Activated CD4-positive, alpha-beta T cell treated with anti-CD3 and anti-CD28 coated beads for 36 hours (primary cell): ENCODE measurements at regions of chr3 and their contacts with region 1.

Region 1: DNA sequence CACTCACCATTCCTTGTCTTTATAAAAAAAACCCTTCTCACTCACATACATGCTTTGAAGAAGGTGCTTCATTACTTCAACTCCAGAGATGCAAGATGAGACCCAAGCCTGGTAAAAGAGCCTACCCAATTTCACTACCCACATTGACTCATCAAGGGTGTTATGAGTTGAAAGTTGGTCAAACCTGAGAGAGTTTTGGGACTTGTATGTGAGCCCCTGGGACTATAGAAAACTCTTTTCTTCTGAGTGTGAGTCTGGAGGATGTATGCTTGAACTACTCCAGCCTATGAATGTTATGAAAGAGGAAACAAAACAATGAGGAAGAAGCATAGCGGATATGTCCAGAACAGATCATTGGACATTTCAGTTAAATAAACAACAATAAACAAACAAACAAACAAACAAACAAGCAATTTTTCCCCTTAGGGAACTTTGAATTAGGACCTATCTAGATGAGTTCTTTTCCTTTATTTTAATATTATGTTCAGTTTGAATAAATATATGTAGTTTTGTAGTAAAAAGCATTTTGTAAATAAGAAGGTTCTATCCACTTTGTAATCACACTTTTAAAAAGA is 106.6 kb upstream of the SATB1 start:
- DNase-seq: no peak
- ATAC-seq: peak; percentile 94
- H3K4me3 Mint-ChIP-seq: no peak overlapping the region
- H3K27ac Mint-ChIP-seq: no peak overlapping the region
- H3K4me1 Mint-ChIP-seq: peaks cover 18% of the 10 kb centered on the region
- H3K27me3 Mint-ChIP-seq: no peaks in the 10 kb centered on the region

Region 2: DNA sequence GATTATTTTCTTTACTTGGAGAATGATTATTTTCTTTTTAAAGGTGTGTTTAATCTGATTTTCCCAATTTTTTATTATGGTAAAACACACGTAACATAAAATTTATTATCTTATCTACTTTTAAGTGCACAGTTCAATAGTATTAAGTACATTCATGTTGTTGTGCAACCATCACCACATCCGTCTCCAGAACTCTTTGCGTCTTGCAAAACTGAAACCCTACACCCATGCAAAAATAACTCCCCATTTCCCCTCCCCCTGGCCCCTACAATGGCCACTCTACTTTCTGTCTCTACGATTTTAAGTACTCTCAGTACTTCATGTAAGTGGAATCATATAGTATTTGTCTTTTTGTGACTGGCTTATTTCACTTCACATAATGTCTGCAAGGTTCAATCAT is 337.3 kb before region 1 on chr3:
- CTCF ChIA-PET with region 1: no interaction called
- POLR2A ChIA-PET with region 1: no interaction called
- intact Hi-C with region 1: no loop called
- DNase-seq: no peak
- ATAC-seq: no peak
- H3K4me3 Mint-ChIP-seq: no peak overlapping the region
- H3K27ac Mint-ChIP-seq: no peak overlapping the region
- H3K4me1 Mint-ChIP-seq: no peaks in the 10 kb centered on the region
- H3K27me3 Mint-ChIP-seq: peaks cover 9% of the 10 kb centered on the region

Region 3: GRCh38 chr3:18295171-18295920 is 236.4 kb before region 1 on chr3:
- CTCF ChIA-PET with region 1: no interaction called
- POLR2A ChIA-PET with region 1: no interaction called
- intact Hi-C with region 1: no loop called
- DNase-seq: peak; percentile 71
- ATAC-seq: peak; percentile 89
- H3K4me3 Mint-ChIP-seq: no peak overlapping the region
- H3K27ac Mint-ChIP-seq: no peak overlapping the region
- H3K4me1 Mint-ChIP-seq: no peaks in the 10 kb centered on the region
- H3K27me3 Mint-ChIP-seq: no peaks in the 10 kb centered on the region

Region 4: DNA sequence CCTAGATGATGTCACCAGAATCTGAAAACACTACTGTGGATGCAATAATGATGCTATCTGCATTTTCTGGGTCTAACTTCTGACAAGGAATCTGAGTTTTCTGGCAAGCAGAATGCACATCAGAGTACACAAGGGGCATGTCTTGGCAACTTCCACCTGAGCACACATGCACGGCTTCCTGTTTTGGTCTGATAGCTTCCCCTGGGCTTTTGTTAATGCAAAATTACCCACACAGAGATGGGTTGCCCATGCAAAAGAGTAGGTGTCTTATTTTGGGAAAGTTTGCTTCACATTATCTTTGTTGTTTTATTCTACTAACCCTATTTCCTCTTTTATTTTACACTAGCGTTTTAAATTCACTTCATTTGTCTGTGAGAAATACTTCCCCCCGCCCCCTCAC is 32.4 kb before region 1 on chr3:
- CTCF ChIA-PET with region 1: no interaction called
- POLR2A ChIA-PET with region 1: no interaction called
- intact Hi-C with region 1: no loop called
- DNase-seq: peak; percentile 15
- ATAC-seq: peak; percentile 51
- H3K4me3 Mint-ChIP-seq: peak overlapping the region; percentile 24
- H3K27ac Mint-ChIP-seq: peak overlapping the region; percentile 69
- H3K4me1 Mint-ChIP-seq: peaks cover 46% of the 10 kb centered on the region
- H3K27me3 Mint-ChIP-seq: no peaks in the 10 kb centered on the region

Region 5: DNA sequence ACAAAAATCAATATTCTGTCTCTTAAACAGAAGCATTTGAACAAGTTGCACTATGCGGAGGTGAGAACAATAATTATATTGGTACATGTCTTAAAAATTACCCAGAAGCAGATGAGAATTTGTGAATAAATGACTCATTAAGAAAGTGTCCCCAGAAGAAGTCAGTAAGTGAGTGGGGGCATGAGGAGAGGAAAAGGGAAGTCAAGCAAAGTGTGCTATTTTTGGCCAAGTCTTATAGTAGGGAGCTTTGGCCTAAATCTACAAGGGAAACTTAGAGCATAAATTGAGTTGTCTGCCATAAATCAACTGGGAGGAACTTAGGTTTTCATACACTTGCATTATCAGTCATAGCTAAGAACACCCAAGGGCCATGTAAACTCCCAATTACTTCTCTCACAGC is 19.7 kb before region 1 on chr3:
- CTCF ChIA-PET with region 1: interaction called, 4 read pairs
- POLR2A ChIA-PET with region 1: no interaction called
- intact Hi-C with region 1: loop called in 1 of 2 experiments (anchors 2 kb)
- DNase-seq: no peak
- ATAC-seq: no peak
- H3K4me3 Mint-ChIP-seq: no peak overlapping the region
- H3K27ac Mint-ChIP-seq: no peak overlapping the region
- H3K4me1 Mint-ChIP-seq: peaks cover 17% of the 10 kb centered on the region
- H3K27me3 Mint-ChIP-seq: no peaks in the 10 kb centered on the region

Region 6: DNA sequence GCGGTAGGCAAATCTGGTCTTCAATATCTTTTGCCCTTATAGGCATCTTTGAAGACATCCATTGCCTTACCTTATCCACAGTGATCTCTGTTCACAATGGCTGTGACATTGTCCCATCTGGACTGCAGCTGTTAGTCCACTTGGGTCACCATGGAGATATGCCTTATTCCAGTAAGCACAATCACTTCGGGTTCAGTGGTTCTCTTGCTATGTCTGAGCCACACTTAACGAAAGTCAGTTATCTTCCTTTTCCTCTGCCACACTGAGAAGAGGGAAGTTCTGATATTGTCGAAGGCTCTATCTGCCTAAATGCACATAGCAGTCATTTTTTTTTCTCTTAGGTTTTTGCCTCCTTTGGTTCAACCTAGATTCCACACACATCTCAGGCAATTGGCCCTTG is 12.4 kb after region 1 on chr3:
- CTCF ChIA-PET with region 1: interaction called, 5 read pairs
- POLR2A ChIA-PET with region 1: no interaction called
- intact Hi-C with region 1: loop called in 1 of 2 experiments (anchors 1 kb)
- DNase-seq: no peak
- ATAC-seq: no peak
- H3K4me3 Mint-ChIP-seq: no peak overlapping the region
- H3K27ac Mint-ChIP-seq: no peak overlapping the region
- H3K4me1 Mint-ChIP-seq: peaks cover 7% of the 10 kb centered on the region
- H3K27me3 Mint-ChIP-seq: no peaks in the 10 kb centered on the region